ENCODE measurements at regions of chr4 and their contacts with region 1.

Region 1: GRCh38 chr4:56093576-56093975 is 144.8 kb downstream of the CEP135 start:
- DNase-seq: no peak
- ATAC-seq: no peak
- H3K4me3 ChIP-seq: no peak overlapping the region
- H3K27ac ChIP-seq: no peak overlapping the region
- H3K4me1 ChIP-seq: no peaks in the 10 kb centered on the region
- H3K27me3 ChIP-seq: no peaks in the 10 kb centered on the region
- CTCF ChIP-seq: no peak

Region 2: GRCh38 chr4:56129431-56129861 is 35.9 kb after region 1 on chr4:
- CTCF ChIA-PET with region 1: no interaction called
- POLR2A ChIA-PET with region 1: no interaction called
- in situ Hi-C with region 1: no loop called
- intact Hi-C with region 1: loop called (anchors 5 kb)
- DNase-seq: no peak
- ATAC-seq: 0 out of 2 replicates have a peak, but pooled peaks have one; percentile 60
- H3K4me3 ChIP-seq: no peak overlapping the region
- H3K27ac ChIP-seq: no peak overlapping the region
- H3K4me1 ChIP-seq: no peaks in the 10 kb centered on the region; the same call in 1 of the 2 replicates
- H3K27me3 ChIP-seq: no peaks in the 10 kb centered on the region
- CTCF ChIP-seq: peak; percentile 53

Region 3: DNA sequence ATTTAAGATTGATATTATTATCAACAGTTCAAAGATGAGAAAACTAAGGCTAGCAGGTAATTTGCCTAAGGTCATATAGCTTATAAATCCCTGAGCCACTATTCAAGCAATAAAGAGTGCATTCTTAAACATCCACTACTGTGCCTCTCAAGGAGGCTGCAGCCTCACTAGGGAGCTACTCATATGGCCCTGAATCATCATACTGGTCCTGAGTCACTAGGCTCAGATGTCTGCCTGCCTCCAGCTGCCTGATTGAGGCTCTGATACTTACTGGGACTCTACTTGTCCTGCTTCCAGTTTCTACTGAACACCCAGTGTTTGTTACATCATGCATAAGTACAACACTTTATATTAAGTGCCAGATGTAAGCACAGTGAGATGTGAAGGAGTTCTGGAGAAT is 183.0 kb after region 1 on chr4:
- CTCF ChIA-PET with region 1: no interaction called
- POLR2A ChIA-PET with region 1: interaction called, 11 read pairs
- in situ Hi-C with region 1: no loop called
- intact Hi-C with region 1: no loop called
- DNase-seq: no peak
- ATAC-seq: no peak
- H3K4me3 ChIP-seq: no peak overlapping the region
- H3K27ac ChIP-seq: no peak overlapping the region
- H3K4me1 ChIP-seq: no peaks in the 10 kb centered on the region
- H3K27me3 ChIP-seq: no peaks in the 10 kb centered on the region
- CTCF ChIP-seq: no peak

Measured in Panc1 (cell line).